ENCODE measurements at regions of chr18 and their contacts with region 1.

Region 1: DNA sequence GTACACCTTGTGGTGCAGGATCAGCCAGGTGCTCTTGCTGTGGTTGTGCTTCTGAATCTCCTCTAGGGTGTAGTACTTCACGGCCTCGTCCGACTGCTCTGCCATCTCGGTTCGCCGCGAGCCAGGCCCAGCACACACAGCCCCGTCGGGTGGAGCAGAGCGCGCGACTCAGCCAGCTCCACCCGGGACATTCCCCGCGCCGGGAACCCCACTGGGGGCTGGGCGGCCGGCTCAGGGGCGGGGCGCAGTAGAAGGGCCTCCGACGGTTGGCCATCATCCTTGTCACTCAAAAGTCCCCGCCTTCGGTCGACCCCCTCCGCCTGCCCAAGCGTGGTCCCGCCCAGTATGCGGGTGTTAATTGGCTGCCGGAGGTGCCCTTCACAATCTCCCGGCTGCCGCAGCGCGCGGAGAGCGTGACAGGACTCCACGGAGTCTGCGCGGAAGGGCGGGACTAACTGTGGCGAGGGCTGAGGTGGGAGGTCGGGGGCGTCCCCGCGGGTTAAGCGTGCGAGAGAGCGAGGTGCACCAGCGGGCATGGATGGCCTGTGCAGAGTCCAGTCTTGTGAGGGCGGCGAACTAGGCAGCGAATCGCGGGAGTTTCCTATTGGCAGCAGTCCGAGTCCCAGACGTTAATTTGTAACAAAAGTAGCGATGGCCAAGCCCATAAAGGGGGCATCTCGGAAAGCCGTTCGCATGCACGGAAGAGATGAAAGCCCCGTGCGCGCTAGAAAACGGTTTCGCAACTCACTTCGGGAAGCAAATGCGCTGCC is at the start of gene CYB5A:
- DNase-seq: peak; percentile 87 to 99
- H3K4me3 ChIP-seq: peak within 1 kb of the TSS; percentile 63 to 87
- H3K27ac ChIP-seq: peak within 1 kb of the TSS; percentile 30 to 58
- H3K4me1 ChIP-seq: peaks cover 5 to 8% of the 10 kb centered on the region in 2 donors
- H3K27me3 ChIP-seq: no peaks in the 10 kb centered on the region
- CTCF ChIP-seq: no peak
- total RNA-seq, gene CYB5A: 58.1 TPM

Region 2: GRCh38 chr18:74147779-74148542 is 144.0 kb before region 1 on chr18 and contains the starts of genes FBXO15 and TIMM21:
- intact Hi-C with region 1: loop called (anchors 1 kb)
- DNase-seq: peak; percentile 82 to 97
- H3K4me3 ChIP-seq: peak within 1 kb of the TSS; percentile 78 to 90
- H3K27ac ChIP-seq: peak within 1 kb of the TSS; percentile 84 to 95
- H3K4me1 ChIP-seq: peaks cover 4 to 12% of the 10 kb centered on the region in 2 donors
- H3K27me3 ChIP-seq: no peaks in the 10 kb centered on the region
- CTCF ChIP-seq: no peak
- total RNA-seq, gene FBXO15: not detected
- total RNA-seq, gene TIMM21: 27.2 TPM

Region 3: GRCh38 chr18:74342416-74343043 is 50.6 kb after region 1 on chr18:
- intact Hi-C with region 1: loop called (anchors 2 kb)
- DNase-seq: no peak
- H3K4me3 ChIP-seq: no peak overlapping the region
- H3K27ac ChIP-seq: no peak overlapping the region
- H3K4me1 ChIP-seq: no peaks in the 10 kb centered on the region
- H3K27me3 ChIP-seq: no peaks in the 10 kb centered on the region
- CTCF ChIP-seq: peak; percentile 22 to 66 (median 45)

Region 4: GRCh38 chr18:74353169-74353775 is 61.3 kb after region 1 on chr18:
- intact Hi-C with region 1: loop called (anchors 5 kb)
- DNase-seq: peak in 1 of 2 donors; percentile 85
- H3K4me3 ChIP-seq: no peak overlapping the region
- H3K27ac ChIP-seq: peak overlapping the region; percentile 8 to 35
- H3K4me1 ChIP-seq: peaks cover 0 to 3% of the 10 kb centered on the region in 2 donors
- H3K27me3 ChIP-seq: no peaks in the 10 kb centered on the region
- CTCF ChIP-seq: peak; percentile 59 to 77 (median 60)

Region 5: DNA sequence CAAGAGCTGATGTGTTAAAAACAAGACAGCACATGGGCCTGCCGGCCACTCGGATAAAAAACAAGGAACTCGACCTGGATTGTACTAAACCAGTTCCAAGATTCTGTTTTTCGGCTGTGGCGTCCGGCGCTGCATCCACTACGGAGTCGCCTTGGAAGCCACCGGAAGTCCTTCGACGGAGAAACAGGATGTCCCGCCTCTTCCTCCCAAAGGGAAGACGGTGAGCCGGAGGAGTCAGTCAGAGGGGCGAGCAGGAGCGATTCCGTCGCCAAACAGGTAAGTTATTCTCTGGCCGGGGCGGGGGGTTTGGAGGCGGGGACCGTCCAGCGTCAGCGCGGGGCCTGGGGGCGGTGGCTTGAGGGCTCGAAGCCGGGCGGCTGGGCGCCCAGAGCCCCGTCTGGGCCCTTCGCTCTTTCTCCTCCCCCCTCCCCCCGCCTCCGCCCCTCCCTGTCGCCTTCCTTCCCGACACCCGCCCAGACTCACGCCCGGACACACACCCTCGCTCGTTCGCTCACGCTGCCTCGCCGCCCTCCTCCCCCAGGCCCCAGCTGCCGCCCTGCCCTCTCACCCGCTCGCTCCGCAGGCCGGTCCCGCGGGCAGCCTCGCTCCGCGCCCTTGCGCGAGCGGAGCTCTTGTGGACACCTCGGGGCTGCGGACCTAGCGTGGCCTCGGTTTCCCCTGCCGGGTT is 305.9 kb after region 1 on chr18 and contains the start of gene ZNF407:
- intact Hi-C with region 1: loop called (anchors 1 kb)
- DNase-seq: peak; percentile 34 to 89
- H3K4me3 ChIP-seq: peak within 1 kb of the TSS; percentile 84 to 89
- H3K27ac ChIP-seq: peak within 1 kb of the TSS; percentile 99
- H3K4me1 ChIP-seq: peaks cover 0 to 17% of the 10 kb centered on the region in 2 donors
- H3K27me3 ChIP-seq: no peaks in the 10 kb centered on the region
- CTCF ChIP-seq: peak in 1 of 3 experiments; percentile 16
- total RNA-seq, gene ZNF407: 8.7 TPM

Measured in ascending aorta (tissue), 2 donors.